ENCODE measurements at regions of chr10 and their contacts with region 1.

Region 1: GRCh38 chr10:114304017-114304570 is 65.0 kb downstream of the VWA2 start:
- DNase-seq: peak; percentile 83
- ATAC-seq: peak; percentile 35
- H3K4me3 Mint-ChIP-seq: peak overlapping the region; percentile 74
- H3K27ac Mint-ChIP-seq: no peak overlapping the region
- H3K4me1 Mint-ChIP-seq: peaks cover 5% of the 10 kb centered on the region
- H3K27me3 Mint-ChIP-seq: 0 out of 2 replicates have a peak, but pooled peaks cover 3% of the 10 kb centered on the region
- CTCF ChIP-seq: peak; percentile 76

Region 2: DNA sequence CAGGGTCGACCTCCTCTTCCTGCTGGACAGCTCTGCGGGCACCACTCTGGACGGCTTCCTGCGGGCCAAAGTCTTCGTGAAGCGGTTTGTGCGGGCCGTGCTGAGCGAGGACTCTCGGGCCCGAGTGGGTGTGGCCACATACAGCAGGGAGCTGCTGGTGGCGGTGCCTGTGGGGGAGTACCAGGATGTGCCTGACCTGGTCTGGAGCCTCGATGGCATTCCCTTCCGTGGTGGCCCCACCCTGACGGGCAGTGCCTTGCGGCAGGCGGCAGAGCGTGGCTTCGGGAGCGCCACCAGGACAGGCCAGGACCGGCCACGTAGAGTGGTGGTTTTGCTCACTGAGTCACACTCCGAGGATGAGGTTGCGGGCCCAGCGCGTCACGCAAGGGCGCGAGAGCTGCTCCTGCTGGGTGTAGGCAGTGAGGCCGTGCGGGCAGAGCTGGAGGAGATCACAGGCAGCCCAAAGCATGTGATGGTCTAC is 18.1 kb before region 1 on chr10:
- CTCF ChIA-PET with region 1: interaction called, 20 read pairs
- POLR2A ChIA-PET with region 1: no interaction called
- DNase-seq: no peak
- ATAC-seq: peak; percentile 58
- H3K4me3 Mint-ChIP-seq: no peak overlapping the region
- H3K27ac Mint-ChIP-seq: no peak overlapping the region
- H3K4me1 Mint-ChIP-seq: no peaks in the 10 kb centered on the region
- H3K27me3 Mint-ChIP-seq: no peaks in the 10 kb centered on the region
- CTCF ChIP-seq: no peak

Region 3: GRCh38 chr10:114343623-114344505 is 39.8 kb after region 1 on chr10:
- CTCF ChIA-PET with region 1: interaction called, 25 read pairs
- POLR2A ChIA-PET with region 1: no interaction called
- DNase-seq: no peak
- ATAC-seq: no peak
- H3K4me3 Mint-ChIP-seq: no peak overlapping the region
- H3K27ac Mint-ChIP-seq: peak overlapping the region; percentile 38
- H3K4me1 Mint-ChIP-seq: peaks cover 16% of the 10 kb centered on the region
- H3K27me3 Mint-ChIP-seq: no peaks in the 10 kb centered on the region
- CTCF ChIP-seq: no peak

Region 4: GRCh38 chr10:114427124-114427852 is 123.2 kb after region 1 on chr10:
- CTCF ChIA-PET with region 1: interaction called, 52 read pairs
- POLR2A ChIA-PET with region 1: interaction called, 3 read pairs
- DNase-seq: no peak
- ATAC-seq: peak; percentile 60
- H3K4me3 Mint-ChIP-seq: no peak overlapping the region
- H3K27ac Mint-ChIP-seq: no peak overlapping the region
- H3K4me1 Mint-ChIP-seq: peaks cover 14% of the 10 kb centered on the region
- H3K27me3 Mint-ChIP-seq: no peaks in the 10 kb centered on the region
- CTCF ChIP-seq: no peak

Region 5: DNA sequence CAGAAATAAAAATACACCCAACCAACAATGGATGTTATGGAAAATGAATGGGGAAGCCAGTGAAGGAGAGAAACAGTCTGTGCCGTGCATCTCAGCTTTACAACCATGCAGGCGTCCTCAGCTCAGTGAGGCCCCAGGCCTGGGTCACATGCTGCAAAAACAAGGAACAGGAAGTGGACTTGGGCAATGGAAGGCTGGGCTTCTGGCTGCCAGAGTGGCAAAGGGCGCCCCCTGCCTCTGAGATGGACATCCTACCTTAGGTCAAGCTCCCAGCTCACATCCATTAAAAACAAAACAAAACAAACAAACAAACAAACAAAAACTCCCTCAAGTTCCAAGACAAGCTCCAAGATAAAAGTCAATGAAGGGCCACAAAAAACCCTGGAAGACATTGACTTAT is 154.9 kb after region 1 on chr10:
- CTCF ChIA-PET with region 1: interaction called, 126 read pairs
- POLR2A ChIA-PET with region 1: no interaction called
- DNase-seq: peak; percentile 78
- ATAC-seq: peak; percentile 99
- H3K4me3 Mint-ChIP-seq: no peak overlapping the region
- H3K27ac Mint-ChIP-seq: no peak overlapping the region
- H3K4me1 Mint-ChIP-seq: no peaks in the 10 kb centered on the region
- H3K27me3 Mint-ChIP-seq: no peaks in the 10 kb centered on the region
- CTCF ChIP-seq: peak; percentile 71

Region 6: GRCh38 chr10:114504769-114505579 is 200.9 kb after region 1 on chr10:
- CTCF ChIA-PET with region 1: no interaction called
- POLR2A ChIA-PET with region 1: no interaction called
- DNase-seq: no peak
- ATAC-seq: peak; percentile 57
- H3K4me3 Mint-ChIP-seq: no peak overlapping the region
- H3K27ac Mint-ChIP-seq: peak overlapping the region; percentile 42; the same call in 1 of the 2 replicates
- H3K4me1 Mint-ChIP-seq: peaks cover 29% of the 10 kb centered on the region
- H3K27me3 Mint-ChIP-seq: no peaks in the 10 kb centered on the region
- CTCF ChIP-seq: no peak

Region 7: GRCh38 chr10:114538181-114538906 is 234.2 kb after region 1 on chr10:
- CTCF ChIA-PET with region 1: interaction called, 10 read pairs
- POLR2A ChIA-PET with region 1: no interaction called
- DNase-seq: peak; percentile 48
- ATAC-seq: peak; percentile 77
- H3K4me3 Mint-ChIP-seq: peak overlapping the region; percentile 34
- H3K27ac Mint-ChIP-seq: no peak overlapping the region
- H3K4me1 Mint-ChIP-seq: peaks cover 32% of the 10 kb centered on the region
- H3K27me3 Mint-ChIP-seq: peaks cover 23% of the 10 kb centered on the region
- CTCF ChIP-seq: no peak

Measured in WTC11 (cell line).